ENCODE measurements at regions of chr2 and their contacts with region 1.

Region 1: DNA sequence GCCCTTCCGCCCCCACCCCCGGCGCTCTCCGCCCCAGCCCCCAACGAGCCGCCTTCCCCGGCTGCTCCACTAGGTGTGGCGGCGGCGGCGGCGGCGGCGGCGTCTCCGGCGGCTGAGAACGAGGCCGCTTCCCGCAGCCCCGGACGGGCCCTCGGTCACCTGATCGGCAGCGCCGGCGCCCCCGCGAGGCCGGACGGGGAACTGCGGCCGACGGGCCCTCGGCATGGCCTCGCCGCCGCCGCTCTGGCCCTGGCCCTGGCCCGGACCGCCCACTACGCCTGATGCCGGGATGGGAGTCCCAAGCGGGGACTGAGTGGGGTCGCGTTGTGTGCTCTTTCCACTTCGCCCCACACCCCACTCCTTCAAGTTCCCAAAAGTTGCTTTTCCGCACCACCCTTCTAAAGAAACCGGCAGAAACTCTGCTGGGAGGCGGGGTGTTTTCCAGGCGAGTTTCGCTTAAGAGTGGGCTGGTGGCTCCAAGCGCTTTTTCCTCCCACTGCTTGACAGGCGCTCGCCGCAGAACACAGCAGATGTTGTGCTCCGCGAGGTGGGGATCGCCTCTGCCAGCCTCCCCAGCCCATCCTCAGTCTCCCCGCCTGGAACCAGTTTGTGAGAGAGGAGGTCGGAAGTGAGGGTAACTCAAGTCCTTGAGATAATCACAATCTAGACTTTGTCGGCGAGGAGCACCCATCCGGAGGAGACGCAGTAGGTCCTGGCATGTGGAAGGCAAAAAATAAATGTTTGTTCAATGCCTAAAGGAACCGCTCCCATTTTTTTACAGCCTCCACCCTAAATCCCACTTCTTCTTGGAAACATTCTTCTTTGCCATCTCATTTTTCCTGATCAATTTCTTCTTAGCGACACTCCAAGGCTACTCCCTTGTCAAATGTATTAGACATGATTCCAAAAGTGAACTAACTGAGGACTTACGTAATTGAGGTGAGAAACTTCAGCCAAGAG is at the start of gene NCKAP1:
- DNase-seq: peak; percentile 91 to 95 (median 92)
- ATAC-seq: peak; percentile 77
- H3K4me3 ChIP-seq: peak within 1 kb of the TSS; percentile 76
- H3K27ac ChIP-seq: peak within 1 kb of the TSS; percentile 74
- H3K4me1 ChIP-seq: peaks cover 8 to 13% of the 10 kb centered on the region in 2 experiments; a peak in 3 of 5 replicates
- H3K27me3 ChIP-seq: no peaks in the 10 kb centered on the region
- CTCF ChIP-seq: peak; percentile 77 to 93 (median 80)
- EP300 ChIP-seq: no peak; the same call in 1 of the 2 replicates
- POLR2A ChIP-seq: peak; percentile 84
- RAD21 ChIP-seq: peak; percentile 57 to 65
- polyA plus RNA-seq, gene NCKAP1: 34.0 to 35.1 TPM

Region 2: GRCh38 chr2:182318466-182319309 is 719.9 kb before region 1 on chr2:
- CTCF ChIA-PET with region 1: no interaction called
- POLR2A ChIA-PET with region 1: no interaction called
- in situ Hi-C with region 1: no loop called
- intact Hi-C with region 1: no loop called
- DNase-seq: no peak
- ATAC-seq: no peak
- H3K4me3 ChIP-seq: no peak overlapping the region
- H3K27ac ChIP-seq: no peak overlapping the region
- H3K4me1 ChIP-seq: no peaks in the 10 kb centered on the region
- H3K27me3 ChIP-seq: no peaks in the 10 kb centered on the region
- CTCF ChIP-seq: no peak
- EP300 ChIP-seq: no peak
- POLR2A ChIP-seq: no peak
- RAD21 ChIP-seq: no peak

Region 3: GRCh38 chr2:182994228-182994912 is 44.3 kb before region 1 on chr2:
- CTCF ChIA-PET with region 1: no interaction called
- POLR2A ChIA-PET with region 1: interaction called, 3 read pairs
- in situ Hi-C with region 1: no loop called
- intact Hi-C with region 1: loop called (anchors 2 kb)
- DNase-seq: peak in 2 of 4 experiments; percentile 55 to 87
- ATAC-seq: peak; percentile 94
- H3K4me3 ChIP-seq: no peak overlapping the region
- H3K27ac ChIP-seq: peak overlapping the region; percentile 26; the same call in 2 of the 3 replicates
- H3K4me1 ChIP-seq: peaks cover 5 to 9% of the 10 kb centered on the region in 2 experiments; a peak in 4 of 5 replicates
- H3K27me3 ChIP-seq: no peaks in the 10 kb centered on the region
- CTCF ChIP-seq: no peak
- EP300 ChIP-seq: peak; percentile 11; the same call in 1 of the 2 replicates
- POLR2A ChIP-seq: peak; percentile 40; the same call in 1 of the 2 replicates
- RAD21 ChIP-seq: no peak

Region 4: DNA sequence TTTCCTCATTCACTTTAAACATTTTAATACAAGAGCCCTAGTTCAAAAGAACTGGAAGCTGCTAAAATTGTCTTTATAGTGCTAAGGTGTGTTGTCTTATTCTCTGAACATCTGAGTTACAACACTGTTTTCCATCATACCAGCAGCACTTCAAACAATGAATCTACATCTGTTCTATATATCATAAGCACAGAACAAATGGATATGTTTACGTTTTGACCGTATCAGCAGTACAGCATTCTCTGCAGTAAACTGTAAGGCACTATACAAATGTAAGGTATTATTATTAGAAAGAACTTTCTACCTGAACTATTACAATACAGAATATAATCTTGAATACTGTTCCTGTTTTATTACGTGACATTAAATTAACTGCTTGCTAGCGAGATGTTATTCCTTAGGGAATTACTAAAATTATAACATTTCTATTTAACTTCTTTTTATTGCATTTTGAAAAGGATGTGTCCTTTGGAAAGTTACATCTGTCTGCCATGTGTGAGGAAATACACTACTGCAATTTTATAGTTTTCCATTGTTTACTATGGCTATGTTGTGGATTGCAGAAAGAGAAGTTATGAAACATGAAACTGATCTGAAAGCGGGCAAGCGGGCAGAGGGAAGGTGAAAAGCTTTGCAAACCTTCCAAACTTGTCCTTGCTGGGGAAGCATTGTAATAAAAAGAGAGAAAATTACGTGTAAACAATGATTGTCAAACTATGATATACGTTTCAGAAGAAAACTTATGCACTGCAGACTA is 14.1 kb before region 1 on chr2:
- CTCF ChIA-PET with region 1: no interaction called
- POLR2A ChIA-PET with region 1: interaction called, 16 read pairs
- in situ Hi-C with region 1: no loop called
- intact Hi-C with region 1: no loop called
- DNase-seq: no peak
- ATAC-seq: peak; percentile 48
- H3K4me3 ChIP-seq: no peak overlapping the region
- H3K27ac ChIP-seq: no peak overlapping the region
- H3K4me1 ChIP-seq: peaks cover 0 to 3% of the 10 kb centered on the region in 2 experiments; a peak in 2 of 5 replicates
- H3K27me3 ChIP-seq: no peaks in the 10 kb centered on the region
- CTCF ChIP-seq: no peak
- EP300 ChIP-seq: no peak
- POLR2A ChIP-seq: no peak
- RAD21 ChIP-seq: no peak

Region 5: GRCh38 chr2:183078465-183079138 is 40.0 kb after region 1 on chr2 and contains the start of gene DUSP19:
- CTCF ChIA-PET with region 1: no interaction called
- POLR2A ChIA-PET with region 1: no interaction called
- in situ Hi-C with region 1: no loop called
- intact Hi-C with region 1: loop called (anchors 1 kb)
- DNase-seq: peak; percentile 97 to 99 (median 98)
- ATAC-seq: peak; percentile 90
- H3K4me3 ChIP-seq: peak within 1 kb of the TSS; percentile 58
- H3K27ac ChIP-seq: peak within 1 kb of the TSS; percentile 68
- H3K4me1 ChIP-seq: peaks cover 0 to 13% of the 10 kb centered on the region in 2 experiments; a peak in 2 of 5 replicates
- H3K27me3 ChIP-seq: no peaks in the 10 kb centered on the region
- CTCF ChIP-seq: no peak
- EP300 ChIP-seq: no peak
- POLR2A ChIP-seq: peak; percentile 93
- RAD21 ChIP-seq: no peak; a peak in 1 of 4 replicates
- polyA plus RNA-seq, gene DUSP19: 2.7 to 3.1 TPM

Region 6: DNA sequence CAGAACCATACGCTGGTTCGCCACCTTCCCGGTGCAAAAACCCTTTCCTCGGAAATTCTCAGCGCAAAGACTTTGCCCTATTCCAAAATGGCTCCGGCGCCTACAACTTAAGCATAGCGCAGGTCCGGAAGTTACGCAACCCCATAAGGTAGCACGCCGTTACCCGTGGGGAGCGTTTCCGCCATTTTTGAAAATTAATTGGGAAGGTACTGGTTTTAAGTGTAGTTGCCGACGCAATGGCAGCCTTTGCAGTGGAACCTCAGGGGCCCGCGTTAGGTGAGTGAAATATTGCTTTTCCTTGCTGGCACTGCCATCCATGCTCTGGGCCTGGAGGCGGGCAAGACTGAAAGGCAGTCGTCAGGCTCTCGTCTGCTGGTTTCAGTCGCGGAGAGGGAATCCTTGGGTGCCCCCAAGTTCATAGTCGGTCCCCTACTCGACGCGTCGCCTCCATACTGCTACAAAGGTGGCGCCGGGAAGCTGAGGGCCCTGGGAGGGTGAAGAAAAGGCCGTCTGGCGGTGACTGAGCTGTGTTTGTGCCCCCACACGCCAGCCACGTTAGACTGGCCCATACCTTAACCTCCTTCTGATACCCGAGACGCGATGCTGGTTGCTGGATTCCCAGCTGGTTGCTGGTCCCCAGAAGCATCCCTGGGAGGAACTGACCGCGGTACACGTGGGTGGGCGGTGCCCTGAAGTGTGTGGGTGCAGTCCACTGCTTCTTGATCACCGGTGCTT is 85.8 kb after region 1 on chr2 and contains the start of gene NUP35:
- CTCF ChIA-PET with region 1: no interaction called
- POLR2A ChIA-PET with region 1: no interaction called
- in situ Hi-C with region 1: no loop called
- intact Hi-C with region 1: loop called (anchors 2 kb)
- DNase-seq: peak; percentile 80 to 95 (median 84)
- ATAC-seq: peak; percentile 90
- H3K4me3 ChIP-seq: peak within 1 kb of the TSS; percentile 54
- H3K27ac ChIP-seq: peak within 1 kb of the TSS; percentile 89
- H3K4me1 ChIP-seq: peaks cover 6 to 9% of the 10 kb centered on the region in 2 experiments; a peak in 2 of 5 replicates
- H3K27me3 ChIP-seq: no peaks in the 10 kb centered on the region
- CTCF ChIP-seq: no peak
- EP300 ChIP-seq: peak; percentile 50; the same call in 1 of the 2 replicates
- POLR2A ChIP-seq: peak; percentile 95
- RAD21 ChIP-seq: peak in 1 of 2 experiments; percentile 1; a peak in 1 of 4 replicates
- polyA plus RNA-seq, gene NUP35: 71.0 to 78.2 TPM

Region 7: DNA sequence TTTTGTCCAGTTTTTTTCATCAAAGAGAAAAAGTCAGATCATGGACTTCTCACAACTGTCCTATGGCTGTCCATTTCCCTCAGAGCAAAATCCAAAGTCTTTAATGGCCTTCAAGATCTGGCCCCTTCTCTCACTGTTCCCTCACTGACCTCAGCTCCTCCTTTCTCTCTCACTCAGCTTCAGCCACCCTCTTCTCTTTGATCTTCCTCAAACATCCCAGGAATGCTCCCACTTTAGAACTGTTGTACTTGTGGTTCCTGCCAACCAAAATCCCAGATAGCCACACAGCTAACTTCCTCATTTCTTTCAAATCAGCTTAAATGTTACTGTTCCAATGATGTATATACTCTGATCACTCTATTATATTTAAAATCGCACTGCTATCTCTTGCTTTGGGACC is 168.5 kb after region 1 on chr2:
- CTCF ChIA-PET with region 1: no interaction called
- POLR2A ChIA-PET with region 1: no interaction called
- in situ Hi-C with region 1: no loop called
- intact Hi-C with region 1: no loop called
- DNase-seq: peak in 1 of 4 experiments; percentile 10
- ATAC-seq: peak; percentile 41
- H3K4me3 ChIP-seq: no peak overlapping the region
- H3K27ac ChIP-seq: no peak overlapping the region
- H3K4me1 ChIP-seq: no peaks in the 10 kb centered on the region
- H3K27me3 ChIP-seq: no peaks in the 10 kb centered on the region
- CTCF ChIP-seq: no peak
- EP300 ChIP-seq: no peak
- POLR2A ChIP-seq: no peak
- RAD21 ChIP-seq: no peak

Region 8: GRCh38 chr2:184203661-184204060 is 1165.0 kb after region 1 on chr2:
- CTCF ChIA-PET with region 1: no interaction called
- POLR2A ChIA-PET with region 1: no interaction called
- in situ Hi-C with region 1: no loop called
- intact Hi-C with region 1: loop called (anchors 5 kb)
- DNase-seq: peak in 1 of 4 experiments; percentile 11
- ATAC-seq: peak; percentile 67
- H3K4me3 ChIP-seq: peak overlapping the region; percentile 45
- H3K27ac ChIP-seq: peak overlapping the region; percentile 80; the same call in 2 of the 3 replicates
- H3K4me1 ChIP-seq: no peaks in the 10 kb centered on the region
- H3K27me3 ChIP-seq: no peaks in the 10 kb centered on the region
- CTCF ChIP-seq: no peak
- EP300 ChIP-seq: no peak
- POLR2A ChIP-seq: no peak
- RAD21 ChIP-seq: no peak